Activated CD4-positive, alpha-beta T cell treated with anti-CD3 and anti-CD28 coated beads for 36 hours (primary cell): ENCODE measurements at regions of chr15 and their contacts with region 1.

Region 1: GRCh38 chr15:90931737-90932659 is at the start of gene HDDC3:
- DNase-seq: peak; percentile 96
- ATAC-seq: peak; percentile 68
- H3K4me3 Mint-ChIP-seq: peak within 1 kb of the TSS; percentile 99
- H3K27ac Mint-ChIP-seq: peak within 1 kb of the TSS; percentile 99
- H3K4me1 Mint-ChIP-seq: peaks cover 47% of the 10 kb centered on the region
- H3K27me3 Mint-ChIP-seq: no peaks in the 10 kb centered on the region
- total RNA-seq, gene HDDC3: 34.2 to 41.2 TPM

Region 2: DNA sequence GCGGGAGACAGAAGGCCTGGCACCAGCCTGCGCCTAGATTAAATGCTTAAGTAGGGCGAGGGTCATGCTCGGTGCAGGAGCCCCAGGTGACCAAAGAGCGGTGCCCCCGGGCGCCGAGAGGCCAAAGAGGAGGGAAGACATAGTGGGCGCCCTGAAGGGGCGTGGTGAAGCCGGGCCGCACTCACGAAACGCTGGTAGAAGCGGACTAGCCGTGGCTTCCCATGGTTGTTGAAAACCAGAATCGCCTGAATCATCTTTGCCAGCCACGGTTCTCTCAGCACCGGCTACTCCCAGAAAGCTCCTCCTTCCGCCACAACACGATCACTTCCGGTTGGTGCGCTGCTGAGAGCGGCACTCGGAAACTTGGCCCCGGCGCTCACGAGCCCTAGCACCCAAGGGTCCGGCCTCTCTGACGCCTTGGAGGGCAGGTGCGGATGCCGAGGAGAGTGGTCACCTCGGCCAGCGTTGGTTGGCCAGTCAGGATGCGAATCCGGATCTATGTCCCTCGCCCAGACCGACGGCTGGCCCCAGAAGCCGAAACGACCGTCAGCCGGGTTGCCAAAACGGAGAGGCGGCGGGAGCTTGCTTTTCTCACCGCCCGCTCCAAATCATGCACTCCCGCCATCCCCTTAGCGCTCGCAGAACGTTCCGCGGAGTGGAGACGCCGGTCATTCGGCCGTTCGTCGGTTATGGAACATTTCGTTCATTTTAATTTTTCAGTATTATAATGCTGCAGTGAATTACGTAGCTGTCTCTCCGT is 1038.1 kb before region 1 on chr15 and contains the start of gene AP3S2:
- CTCF ChIA-PET with region 1: no interaction called
- POLR2A ChIA-PET with region 1: no interaction called
- intact Hi-C with region 1: loop called in 1 of 2 experiments (anchors 5 kb)
- DNase-seq: peak; percentile 96
- ATAC-seq: peak; percentile 82
- H3K4me3 Mint-ChIP-seq: peak within 1 kb of the TSS; percentile 98
- H3K27ac Mint-ChIP-seq: peak within 1 kb of the TSS; percentile 97
- H3K4me1 Mint-ChIP-seq: peaks cover 43% of the 10 kb centered on the region
- H3K27me3 Mint-ChIP-seq: no peaks in the 10 kb centered on the region
- total RNA-seq, gene AP3S2: 12.4 to 15.3 TPM

Region 3: DNA sequence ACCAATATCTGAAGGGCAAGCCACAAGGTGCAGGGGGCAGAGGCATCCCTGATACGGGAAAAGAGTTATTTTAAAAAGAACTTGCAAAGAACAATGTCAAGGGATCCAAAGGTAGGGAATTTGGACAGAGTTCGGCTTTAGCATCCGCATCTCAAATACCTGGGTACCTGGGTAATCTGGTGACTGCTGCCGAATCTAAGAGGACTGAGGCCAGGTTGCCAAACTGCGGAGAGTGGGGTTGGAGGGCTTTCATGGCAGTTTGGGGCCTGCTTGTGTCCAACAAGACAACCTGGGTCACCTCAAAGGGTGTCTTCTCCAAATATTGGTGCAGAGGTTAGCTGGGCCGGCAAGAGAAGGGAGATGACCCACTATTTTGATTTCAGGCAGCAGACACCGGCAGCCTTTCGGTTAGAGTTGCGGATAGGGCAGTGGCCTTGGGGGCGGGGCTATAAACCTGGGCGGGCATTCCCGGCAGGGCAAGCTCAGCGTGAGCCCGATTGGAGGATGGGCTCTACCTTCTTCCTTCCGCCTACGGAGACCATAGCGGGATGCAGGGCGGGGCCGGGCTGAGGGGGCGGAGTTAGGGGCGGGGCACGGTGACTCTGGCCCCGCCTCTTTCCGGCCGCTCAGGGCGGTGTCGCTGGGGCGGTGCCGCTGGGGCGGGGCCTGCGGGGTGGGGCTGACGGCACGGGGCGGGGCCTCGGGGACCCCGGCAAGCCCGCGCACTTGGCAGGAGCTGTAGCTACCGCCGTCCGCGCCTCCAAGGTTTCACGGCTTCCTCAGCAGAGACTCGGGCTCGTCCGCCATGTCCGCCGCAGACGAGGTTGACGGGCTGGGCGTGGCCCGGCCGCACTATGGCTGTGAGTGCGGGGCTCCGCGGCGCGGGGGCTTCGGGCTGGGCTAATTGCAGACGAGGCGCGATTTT is 544.2 kb before region 1 on chr15 and contains the start of gene IQGAP1:
- CTCF ChIA-PET with region 1: interaction called, 5 read pairs
- POLR2A ChIA-PET with region 1: interaction called, 4 read pairs
- intact Hi-C with region 1: loop called in 1 of 2 experiments (anchors 1 kb)
- DNase-seq: peak; percentile 99
- ATAC-seq: peak; percentile 95
- H3K4me3 Mint-ChIP-seq: peak within 1 kb of the TSS; percentile 87
- H3K27ac Mint-ChIP-seq: peak within 1 kb of the TSS; percentile 90
- H3K4me1 Mint-ChIP-seq: peaks cover 44% of the 10 kb centered on the region
- H3K27me3 Mint-ChIP-seq: no peaks in the 10 kb centered on the region
- total RNA-seq, gene IQGAP1: 181 to 334 TPM

Region 4: GRCh38 chr15:90799639-90800170 is 132.3 kb before region 1 on chr15:
- CTCF ChIA-PET with region 1: no interaction called
- POLR2A ChIA-PET with region 1: no interaction called
- intact Hi-C with region 1: no loop called
- DNase-seq: no peak
- ATAC-seq: no peak
- H3K4me3 Mint-ChIP-seq: no peak overlapping the region
- H3K27ac Mint-ChIP-seq: peak overlapping the region; percentile 0
- H3K4me1 Mint-ChIP-seq: no peaks in the 10 kb centered on the region
- H3K27me3 Mint-ChIP-seq: no peaks in the 10 kb centered on the region

Region 5: DNA sequence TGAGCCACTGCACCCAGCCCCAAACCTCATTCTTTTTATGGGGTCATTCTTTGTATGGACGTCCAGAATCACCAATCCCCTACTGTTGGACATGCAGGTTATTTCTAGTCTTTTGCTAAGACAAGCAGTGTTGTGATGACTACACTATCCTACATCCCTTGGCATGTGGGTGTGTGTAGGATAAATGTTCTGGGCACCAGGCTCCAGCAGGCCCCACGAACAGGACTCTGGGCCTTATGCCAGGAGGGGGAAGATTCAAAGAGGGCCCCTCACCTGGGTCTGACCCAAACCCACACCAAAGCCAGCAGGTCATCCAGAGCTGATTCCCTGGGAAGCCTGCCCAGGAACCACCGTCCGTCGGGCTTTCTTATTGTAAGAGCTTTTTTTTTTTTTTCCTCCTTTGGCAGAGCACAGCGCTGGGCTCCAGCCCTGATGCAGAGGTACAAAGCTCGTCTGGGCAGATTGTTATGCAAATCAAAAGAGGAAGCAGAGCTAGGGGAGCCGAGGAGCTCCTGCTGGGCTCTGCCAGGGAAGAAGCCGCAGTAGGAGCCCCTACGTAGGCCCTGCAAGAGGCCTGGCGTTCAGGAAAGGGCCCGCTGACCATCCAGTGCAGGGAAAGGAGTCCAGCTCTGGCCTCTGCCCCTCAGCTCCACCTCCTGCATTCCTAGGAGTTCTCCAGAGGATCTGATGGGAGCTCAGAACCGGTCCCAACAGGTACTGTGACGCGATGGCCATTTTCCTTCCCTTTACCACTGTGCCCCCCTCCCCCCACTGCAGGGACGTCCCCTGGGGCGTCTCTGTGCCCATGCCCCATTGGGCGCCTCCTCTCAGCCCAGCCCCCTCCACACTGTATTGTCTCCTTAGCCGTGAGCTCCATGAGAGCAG is 92.6 kb before region 1 on chr15:
- CTCF ChIA-PET with region 1: interaction called, 6 read pairs
- POLR2A ChIA-PET with region 1: interaction called, 3 read pairs
- intact Hi-C with region 1: loop called in 1 of 2 experiments (anchors 5 kb)
- DNase-seq: peak; percentile 75
- ATAC-seq: peak; percentile 34
- H3K4me3 Mint-ChIP-seq: peak overlapping the region; percentile 80
- H3K27ac Mint-ChIP-seq: peak overlapping the region; percentile 92
- H3K4me1 Mint-ChIP-seq: peaks cover 63% of the 10 kb centered on the region
- H3K27me3 Mint-ChIP-seq: no peaks in the 10 kb centered on the region

Region 6: GRCh38 chr15:90915216-90915807 is 16.7 kb before region 1 on chr15:
- CTCF ChIA-PET with region 1: interaction called, 37 read pairs
- POLR2A ChIA-PET with region 1: no interaction called
- intact Hi-C with region 1: no loop called
- DNase-seq: no peak
- ATAC-seq: no peak
- H3K4me3 Mint-ChIP-seq: no peak overlapping the region
- H3K27ac Mint-ChIP-seq: no peak overlapping the region
- H3K4me1 Mint-ChIP-seq: no peaks in the 10 kb centered on the region
- H3K27me3 Mint-ChIP-seq: no peaks in the 10 kb centered on the region

Region 7: GRCh38 chr15:90994417-90995311 is 62.7 kb after region 1 on chr15 and contains the start of gene PRC1:
- CTCF ChIA-PET with region 1: interaction called, 3 read pairs
- POLR2A ChIA-PET with region 1: interaction called, 5 read pairs
- intact Hi-C with region 1: loop called (anchors 1 kb)
- DNase-seq: peak; percentile 99
- ATAC-seq: peak; percentile 99
- H3K4me3 Mint-ChIP-seq: peak within 1 kb of the TSS; percentile 99
- H3K27ac Mint-ChIP-seq: peak within 1 kb of the TSS; percentile 100
- H3K4me1 Mint-ChIP-seq: peaks cover 19% of the 10 kb centered on the region
- H3K27me3 Mint-ChIP-seq: no peaks in the 10 kb centered on the region
- total RNA-seq, gene PRC1: 111 to 157 TPM

Region 8: GRCh38 chr15:91291673-91292072 is 359.7 kb after region 1 on chr15:
- CTCF ChIA-PET with region 1: no interaction called
- POLR2A ChIA-PET with region 1: no interaction called
- intact Hi-C with region 1: no loop called
- DNase-seq: peak; percentile 19
- ATAC-seq: peak; percentile 66
- H3K4me3 Mint-ChIP-seq: no peak overlapping the region
- H3K27ac Mint-ChIP-seq: no peak overlapping the region
- H3K4me1 Mint-ChIP-seq: peaks cover 3% of the 10 kb centered on the region
- H3K27me3 Mint-ChIP-seq: no peaks in the 10 kb centered on the region

Region 9: GRCh38 chr15:92903941-92904831 is 1972.2 kb after region 1 on chr15:
- CTCF ChIA-PET with region 1: no interaction called
- POLR2A ChIA-PET with region 1: no interaction called
- intact Hi-C with region 1: loop called in 1 of 2 experiments (anchors 5 kb)
- DNase-seq: peak; percentile 100
- ATAC-seq: peak; percentile 80
- H3K4me3 Mint-ChIP-seq: peak overlapping the region; percentile 81
- H3K27ac Mint-ChIP-seq: peak overlapping the region; percentile 98
- H3K4me1 Mint-ChIP-seq: peaks cover 48% of the 10 kb centered on the region
- H3K27me3 Mint-ChIP-seq: no peaks in the 10 kb centered on the region